B cell (primary cell): ENCODE measurements at regions of chr16 and their contacts with region 1.

Region 1: DNA sequence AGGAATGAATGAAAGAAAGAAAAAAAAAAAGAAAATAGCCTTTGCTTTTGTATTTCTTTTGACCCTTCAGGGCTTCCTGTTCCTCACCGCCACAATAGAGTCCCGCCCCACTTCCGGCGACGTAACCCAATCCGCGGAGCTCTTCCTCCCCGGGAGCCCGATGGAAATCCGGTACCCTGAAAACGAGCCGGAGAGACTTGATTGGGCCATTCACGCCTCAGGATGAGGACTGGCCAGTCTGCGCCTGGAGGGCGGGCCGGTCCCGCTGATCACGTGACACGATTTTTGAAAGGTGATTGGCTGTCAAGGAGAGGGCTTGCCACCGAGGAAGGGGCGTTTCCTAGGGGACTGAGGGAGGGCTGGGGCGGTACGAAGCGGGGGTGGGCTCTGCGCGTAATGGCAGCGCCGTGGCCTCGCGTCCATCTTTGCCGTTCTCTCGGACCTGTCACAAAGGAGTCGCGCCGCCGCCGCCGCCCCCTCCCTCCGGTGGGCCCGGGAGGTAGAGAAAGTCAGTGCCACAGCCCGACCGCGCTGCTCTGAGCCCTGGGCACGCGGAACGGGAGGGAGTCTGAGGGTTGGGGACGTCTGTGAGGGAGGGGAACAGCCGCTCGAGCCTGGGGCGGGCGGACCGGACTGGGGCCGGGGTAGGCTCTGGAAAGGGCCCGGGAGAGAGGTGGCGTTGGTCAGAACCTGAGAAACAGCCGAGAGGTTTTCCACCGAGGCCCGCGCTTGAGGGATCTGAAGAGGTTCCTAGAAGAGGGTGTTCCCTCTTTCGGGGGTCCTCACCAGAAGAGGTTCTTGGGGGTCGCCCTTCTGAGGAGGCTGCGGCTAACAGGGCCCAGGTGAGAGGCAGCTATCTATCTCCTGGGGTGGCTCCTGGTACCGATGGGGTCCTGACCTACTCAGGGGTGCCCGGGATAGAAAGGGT is at the starts of genes PSME3IP1 and RSPRY1:
- DNase-seq: peak; percentile 100
- ATAC-seq: peak; percentile 91
- H3K4me3 ChIP-seq: peak within 1 kb of the TSS; percentile 86 to 99 (median 89)
- H3K4me3 Mint-ChIP-seq: peak within 1 kb of the TSS; percentile 90
- H3K27ac ChIP-seq: peak within 1 kb of the TSS; percentile 87 to 92
- H3K27ac Mint-ChIP-seq: peak within 1 kb of the TSS; percentile 98
- H3K4me1 ChIP-seq: peaks cover 26 to 28% of the 10 kb centered on the region in 2 donors
- H3K4me1 Mint-ChIP-seq: peaks cover 61% of the 10 kb centered on the region
- H3K27me3 ChIP-seq: no peaks in the 10 kb centered on the region
- H3K27me3 Mint-ChIP-seq: no peaks in the 10 kb centered on the region
- CTCF ChIP-seq: no peak
- total RNA-seq, gene PSME3IP1: 156 and 166 TPM in 2 replicates
- total RNA-seq, gene RSPRY1: 37.7 and 38.4 TPM in 2 replicates

Region 2: GRCh38 chr16:56729735-56730662 is 456.2 kb before region 1 on chr16 and contains the start of gene NUP93:
- CTCF ChIA-PET with region 1: no interaction called
- POLR2A ChIA-PET with region 1: interaction called, 3 read pairs
- intact Hi-C with region 1: loop called (anchors 2 kb)
- DNase-seq: peak; percentile 93
- ATAC-seq: peak; percentile 97
- H3K4me3 ChIP-seq: peak within 1 kb of the TSS; percentile 76 to 92 (median 88)
- H3K4me3 Mint-ChIP-seq: peak within 1 kb of the TSS; percentile 93
- H3K27ac ChIP-seq: peak within 1 kb of the TSS; percentile 64 to 85
- H3K27ac Mint-ChIP-seq: peak within 1 kb of the TSS; percentile 80
- H3K4me1 ChIP-seq: peaks cover 32 to 38% of the 10 kb centered on the region in 2 donors
- H3K4me1 Mint-ChIP-seq: peaks cover 25% of the 10 kb centered on the region
- H3K27me3 ChIP-seq: no peaks in the 10 kb centered on the region
- H3K27me3 Mint-ChIP-seq: no peaks in the 10 kb centered on the region
- CTCF ChIP-seq: no peak
- total RNA-seq, gene NUP93: 64.6 and 67.1 TPM in 2 replicates

Region 3: GRCh38 chr16:57244767-57245471 is 58.7 kb after region 1 on chr16 and contains the start of gene ARL2BP:
- CTCF ChIA-PET with region 1: no interaction called
- POLR2A ChIA-PET with region 1: interaction called, 3 read pairs
- intact Hi-C with region 1: loop called (anchors 1 kb)
- DNase-seq: peak; percentile 96
- ATAC-seq: peak; percentile 95
- H3K4me3 ChIP-seq: peak within 1 kb of the TSS; percentile 74 to 85 (median 79)
- H3K4me3 Mint-ChIP-seq: peak within 1 kb of the TSS; percentile 99
- H3K27ac ChIP-seq: peak within 1 kb of the TSS; percentile 79 to 92
- H3K27ac Mint-ChIP-seq: peak within 1 kb of the TSS; percentile 96
- H3K4me1 ChIP-seq: peaks cover 26 to 33% of the 10 kb centered on the region in 2 donors
- H3K4me1 Mint-ChIP-seq: peaks cover 34% of the 10 kb centered on the region
- H3K27me3 ChIP-seq: no peaks in the 10 kb centered on the region
- H3K27me3 Mint-ChIP-seq: no peaks in the 10 kb centered on the region
- CTCF ChIP-seq: no peak
- total RNA-seq, gene ARL2BP: 36.8 and 38.8 TPM in 2 replicates

Region 4: GRCh38 chr16:57447186-57447962 is 261.2 kb after region 1 on chr16 and contains the starts of genes CIAPIN1 and COQ9:
- CTCF ChIA-PET with region 1: no interaction called
- POLR2A ChIA-PET with region 1: no interaction called
- intact Hi-C with region 1: loop called (anchors 1 kb)
- DNase-seq: peak; percentile 94
- ATAC-seq: peak; percentile 98
- H3K4me3 ChIP-seq: peak within 1 kb of the TSS; percentile 67 to 96 (median 83)
- H3K4me3 Mint-ChIP-seq: peak within 1 kb of the TSS; percentile 94
- H3K27ac ChIP-seq: peak within 1 kb of the TSS; percentile 68 to 92
- H3K27ac Mint-ChIP-seq: peak within 1 kb of the TSS; percentile 91
- H3K4me1 ChIP-seq: peaks cover 16% of the 10 kb centered on the region in 2 donors
- H3K4me1 Mint-ChIP-seq: peaks cover 28% of the 10 kb centered on the region
- H3K27me3 ChIP-seq: no peaks in the 10 kb centered on the region
- H3K27me3 Mint-ChIP-seq: no peaks in the 10 kb centered on the region
- CTCF ChIP-seq: no peak
- total RNA-seq, gene CIAPIN1: 38.1 and 45.7 TPM in 2 replicates
- total RNA-seq, gene COQ9: 41.5 and 44.6 TPM in 2 replicates

Region 5: DNA sequence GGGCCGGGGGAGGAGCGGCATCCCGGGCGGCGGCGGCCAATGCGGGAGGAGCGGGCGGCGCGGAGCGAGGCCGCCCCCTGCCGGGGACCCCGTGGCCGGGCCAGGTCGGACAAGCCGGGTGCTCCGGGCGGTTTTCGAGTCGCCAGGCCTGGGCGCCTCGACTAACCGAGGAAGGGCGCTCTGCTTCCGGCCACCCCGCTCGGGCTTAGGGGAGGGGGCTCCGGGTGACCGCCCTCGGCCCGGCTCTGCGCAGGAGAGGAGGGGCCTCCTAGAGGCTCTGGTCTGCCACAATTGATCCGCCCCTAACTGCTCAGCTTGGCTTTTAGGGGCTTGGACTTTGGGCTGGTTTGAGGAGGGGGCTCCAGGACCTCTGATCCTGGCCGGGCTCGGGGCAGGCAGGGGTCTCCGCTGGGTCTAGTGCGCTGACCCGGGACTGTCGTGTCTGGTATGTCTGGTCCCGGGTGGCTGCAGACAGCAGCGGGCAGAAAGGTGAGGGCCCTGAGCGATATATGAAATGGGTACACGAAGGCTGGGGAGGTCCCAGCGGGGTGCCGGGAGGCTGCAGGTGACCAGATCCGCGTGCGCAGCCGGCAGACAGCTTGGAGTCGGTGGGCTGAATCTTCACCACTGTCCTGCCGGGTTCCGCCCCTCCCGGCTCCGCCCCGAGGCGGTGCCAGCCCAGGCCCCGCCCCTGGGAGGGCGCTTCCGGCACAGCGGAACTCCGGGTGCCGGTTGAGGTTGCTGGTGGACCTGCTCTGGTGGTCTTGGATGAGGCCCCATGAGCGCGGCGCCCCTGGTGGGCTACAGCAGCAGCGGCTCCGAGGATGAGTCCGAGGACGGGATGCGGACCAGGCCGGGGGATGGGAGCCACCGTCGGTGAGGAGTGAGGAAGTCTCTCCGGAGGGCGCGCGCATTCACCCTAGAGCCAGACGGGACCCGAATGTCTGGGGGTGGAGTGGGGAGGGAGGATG is 814.8 kb after region 1 on chr16 and contains the start of gene USB1:
- CTCF ChIA-PET with region 1: no interaction called
- POLR2A ChIA-PET with region 1: no interaction called
- intact Hi-C with region 1: loop called (anchors 2 kb)
- DNase-seq: peak; percentile 93
- ATAC-seq: peak; percentile 83
- H3K4me3 ChIP-seq: peak within 1 kb of the TSS; percentile 48 to 95 (median 88)
- H3K4me3 Mint-ChIP-seq: peak within 1 kb of the TSS; percentile 97
- H3K27ac ChIP-seq: peak within 1 kb of the TSS; percentile 86 to 87
- H3K27ac Mint-ChIP-seq: peak within 1 kb of the TSS; percentile 96
- H3K4me1 ChIP-seq: peaks cover 16 to 26% of the 10 kb centered on the region in 2 donors
- H3K4me1 Mint-ChIP-seq: peaks cover 34% of the 10 kb centered on the region
- H3K27me3 ChIP-seq: no peaks in the 10 kb centered on the region
- H3K27me3 Mint-ChIP-seq: no peaks in the 10 kb centered on the region
- CTCF ChIP-seq: peak; percentile 71
- total RNA-seq, gene USB1: 32.8 and 34.4 TPM in 2 replicates